Activated CD4-positive, alpha-beta T cell treated with anti-CD3 and anti-CD28 coated beads, Interleukin-2, amount 10 ng/mL, durations not matched to agents 24 days and 14 days (primary cell): ENCODE measurements at regions of chr20 and their contacts with region 1.

Region 1: GRCh38 chr20:32091888-32092346 is 17.6 kb upstream of the TM9SF4 start:
- DNase-seq: peak; percentile 93
- H3K4me3 Mint-ChIP-seq: no peak overlapping the region
- H3K27ac Mint-ChIP-seq: no peak overlapping the region
- H3K4me1 Mint-ChIP-seq: peaks cover 2% of the 10 kb centered on the region
- H3K27me3 Mint-ChIP-seq: peaks cover 18% of the 10 kb centered on the region

Region 2: DNA sequence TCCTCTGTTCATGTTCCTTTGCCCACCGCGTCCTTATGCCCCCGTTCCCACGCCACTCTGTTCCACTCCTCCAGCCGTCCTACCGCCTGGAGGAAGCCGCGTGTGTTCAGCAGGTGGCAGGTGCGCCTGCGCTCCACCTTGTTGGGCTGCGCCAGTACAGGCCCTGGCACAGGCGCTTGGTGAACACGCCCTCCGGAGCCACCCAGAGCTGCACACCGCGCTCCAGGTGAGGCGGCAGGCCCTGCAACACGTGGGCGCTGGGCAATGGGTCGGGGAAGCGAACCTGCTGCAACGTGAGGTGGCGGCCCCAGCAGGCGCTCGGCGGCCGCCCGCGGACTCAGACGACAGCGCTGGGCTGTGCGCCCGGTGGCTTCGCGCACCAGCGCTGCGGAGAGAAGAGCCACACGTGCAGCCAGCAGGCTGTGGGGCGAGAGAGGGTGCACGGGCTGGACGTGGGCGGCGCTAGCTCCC is 242.4 kb before region 1 on chr20:
- intact Hi-C with region 1: loop called (anchors 1 kb)
- DNase-seq: no peak
- H3K4me3 Mint-ChIP-seq: no peak overlapping the region
- H3K27ac Mint-ChIP-seq: no peak overlapping the region
- H3K4me1 Mint-ChIP-seq: no peaks in the 10 kb centered on the region
- H3K27me3 Mint-ChIP-seq: peaks cover 12% of the 10 kb centered on the region

Region 3: GRCh38 chr20:32031007-32031958 is 60.6 kb before region 1 on chr20:
- intact Hi-C with region 1: loop called (anchors 1 kb)
- DNase-seq: peak; percentile 84
- H3K4me3 Mint-ChIP-seq: peak overlapping the region; percentile 27
- H3K27ac Mint-ChIP-seq: no peak overlapping the region
- H3K4me1 Mint-ChIP-seq: no peaks in the 10 kb centered on the region
- H3K27me3 Mint-ChIP-seq: peaks cover 39% of the 10 kb centered on the region

Region 4: GRCh38 chr20:32067234-32067821 is 24.6 kb before region 1 on chr20:
- intact Hi-C with region 1: no loop called
- DNase-seq: no peak
- H3K4me3 Mint-ChIP-seq: no peak overlapping the region
- H3K27ac Mint-ChIP-seq: no peak overlapping the region
- H3K4me1 Mint-ChIP-seq: peaks cover 8% of the 10 kb centered on the region
- H3K27me3 Mint-ChIP-seq: peaks cover 5% of the 10 kb centered on the region

Region 5: DNA sequence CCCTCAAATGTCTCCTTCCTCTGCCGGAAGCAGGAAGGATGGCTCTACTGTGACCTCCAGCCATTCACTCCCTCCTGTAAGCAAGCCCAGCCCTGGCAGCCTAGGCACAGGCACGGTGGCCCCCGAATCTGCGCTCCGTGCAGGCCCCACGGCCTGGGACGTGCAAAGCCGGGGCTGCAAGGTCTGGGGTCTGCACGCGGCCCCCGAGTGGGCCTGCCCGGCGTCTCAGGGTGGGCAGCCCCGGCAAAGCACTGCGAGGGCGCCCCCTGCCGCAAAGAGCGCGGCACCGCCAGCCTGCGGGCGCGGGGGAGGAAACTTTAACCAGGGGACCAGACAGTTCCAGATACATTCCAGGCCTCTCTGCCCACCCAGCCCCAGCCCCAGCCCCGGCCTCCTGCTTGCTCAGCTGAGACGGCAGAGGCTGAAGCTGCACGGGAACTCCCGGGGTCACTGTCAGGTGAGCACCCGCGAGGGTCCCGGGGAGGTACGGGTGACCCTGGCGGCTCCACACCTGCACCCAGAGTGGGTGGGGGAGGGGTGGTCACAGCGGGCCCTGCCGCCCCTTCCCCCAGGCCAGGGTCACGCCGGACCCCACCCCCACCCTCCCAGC is 365.1 kb after region 1 on chr20:
- intact Hi-C with region 1: no loop called
- DNase-seq: peak; percentile 64
- H3K4me3 Mint-ChIP-seq: no peak overlapping the region
- H3K27ac Mint-ChIP-seq: no peak overlapping the region
- H3K4me1 Mint-ChIP-seq: peaks cover 2% of the 10 kb centered on the region
- H3K27me3 Mint-ChIP-seq: no peaks in the 10 kb centered on the region